IMR-90 (cell line): ENCODE measurements at regions of chr21 and their contacts with region 1.

Region 1: GRCh38 chr21:29382006-29382654 is 83.4 kb downstream of the BACH1 start:
- DNase-seq: peak; percentile 75
- ATAC-seq: peak; percentile 92
- H3K4me3 ChIP-seq: no peak overlapping the region
- H3K27ac ChIP-seq: peak overlapping the region; percentile 62; the same call in 1 of the 2 replicates
- H3K4me1 ChIP-seq: peaks cover 15% of the 10 kb centered on the region
- H3K27me3 ChIP-seq: no peaks in the 10 kb centered on the region
- CTCF ChIP-seq: no peak
- POLR2A ChIP-seq: no peak
- RAD21 ChIP-seq: no peak

Region 2: GRCh38 chr21:29433366-29434059 is 51.4 kb after region 1 on chr21:
- CTCF ChIA-PET with region 1: no interaction called
- POLR2A ChIA-PET with region 1: no interaction called
- dilution Hi-C with region 1: no loop called
- in situ Hi-C with region 1: no loop called
- intact Hi-C with region 1: loop called (anchors 5 kb)
- DNase-seq: peak; percentile 71
- ATAC-seq: peak; percentile 88
- H3K4me3 ChIP-seq: no peak overlapping the region
- H3K27ac ChIP-seq: peak overlapping the region; percentile 48; the same call in 1 of the 2 replicates
- H3K4me1 ChIP-seq: peaks cover 14% of the 10 kb centered on the region
- H3K27me3 ChIP-seq: no peaks in the 10 kb centered on the region
- CTCF ChIP-seq: no peak
- POLR2A ChIP-seq: no peak
- RAD21 ChIP-seq: no peak